ENCODE measurements at regions of chr6 and their contacts with region 1.

Region 1: DNA sequence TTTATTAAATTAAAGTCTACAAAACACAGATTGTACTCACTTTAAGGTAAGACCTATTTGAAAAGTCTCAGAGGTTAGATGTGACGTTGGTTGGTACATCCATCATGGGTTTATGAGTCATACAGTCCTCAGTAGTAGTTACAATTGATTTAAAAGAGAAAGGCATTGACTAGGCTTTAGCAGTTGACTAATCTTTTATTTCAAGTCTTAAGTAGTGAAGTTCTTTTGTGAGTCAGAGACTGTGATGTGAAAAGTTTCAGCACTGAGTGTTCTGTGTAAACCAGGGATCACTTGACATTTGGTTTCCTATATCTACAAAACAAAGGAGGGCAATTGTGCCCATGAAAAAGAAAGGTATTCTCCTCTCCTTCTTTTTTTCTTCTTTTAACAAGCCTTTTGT is 221.3 kb downstream of the GRIK2 start:
- DNase-seq: peak; percentile 31 to 100
- H3K4me3 ChIP-seq: no peak overlapping the region
- H3K4me1 ChIP-seq: peaks cover 29% of the 10 kb centered on the region
- H3K27me3 ChIP-seq: no peaks in the 10 kb centered on the region

Region 2: GRCh38 chr6:100257793-100258395 is 1356.9 kb before region 1 on chr6:
- in situ Hi-C with region 1: no loop called
- DNase-seq: peak in 1 of 2 experiments; percentile 66
- H3K4me3 ChIP-seq: no peak overlapping the region
- H3K4me1 ChIP-seq: no peaks in the 10 kb centered on the region
- H3K27me3 ChIP-seq: no peaks in the 10 kb centered on the region

Region 3: DNA sequence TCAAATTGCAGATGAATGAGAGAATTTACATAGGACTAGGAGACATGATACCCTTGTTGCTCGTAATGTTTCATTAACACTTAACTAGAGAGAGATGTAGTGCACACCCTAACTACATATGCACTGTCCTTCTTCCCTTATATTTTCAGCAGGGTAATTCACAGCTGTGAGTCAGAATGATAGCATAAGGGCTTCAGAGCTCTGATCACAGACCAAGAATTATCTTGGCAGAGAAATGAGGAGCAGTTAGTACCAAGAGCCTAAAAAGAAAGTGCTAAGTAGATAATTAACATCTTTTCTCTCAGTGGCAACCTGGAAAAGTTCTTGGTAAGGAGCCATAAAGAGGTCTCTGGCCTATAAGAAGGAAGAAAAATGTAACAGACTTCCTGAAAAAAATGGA is 185.5 kb before region 1 on chr6:
- in situ Hi-C with region 1: loop called (anchors 25 kb)
- DNase-seq: no peak
- H3K4me3 ChIP-seq: no peak overlapping the region
- H3K4me1 ChIP-seq: peaks cover 11% of the 10 kb centered on the region
- H3K27me3 ChIP-seq: no peaks in the 10 kb centered on the region

Region 4: GRCh38 chr6:102197211-102197610 is 582.4 kb after region 1 on chr6:
- in situ Hi-C with region 1: no loop called
- DNase-seq: peak in 1 of 2 experiments; percentile 25
- H3K4me3 ChIP-seq: no peak overlapping the region
- H3K4me1 ChIP-seq: no peaks in the 10 kb centered on the region
- H3K27me3 ChIP-seq: no peaks in the 10 kb centered on the region